CD4-positive, alpha-beta T cell (primary cell): ENCODE measurements at regions of chr1 and their contacts with region 1.

Region 1: GRCh38 chr1:203861379-203862184 is at the start of gene SNRPE:
- DNase-seq: peak; percentile 90 to 99 (median 95)
- ATAC-seq: peak; percentile 98
- H3K4me3 ChIP-seq: peak within 1 kb of the TSS; percentile 95
- H3K4me3 Mint-ChIP-seq: peak within 1 kb of the TSS; percentile 98
- H3K27ac ChIP-seq: peak within 1 kb of the TSS; percentile 64 to 69
- H3K27ac Mint-ChIP-seq: peak within 1 kb of the TSS; percentile 95
- H3K4me1 ChIP-seq: peaks cover 15% of the 10 kb centered on the region
- H3K4me1 Mint-ChIP-seq: peaks cover 30% of the 10 kb centered on the region
- H3K27me3 ChIP-seq: no peaks in the 10 kb centered on the region
- H3K27me3 Mint-ChIP-seq: no peaks in the 10 kb centered on the region
- CTCF ChIP-seq: peak; percentile 87
- total RNA-seq, gene SNRPE: 63.0 to 65.9 TPM

Region 2: GRCh38 chr1:202888531-202889360 is 972.8 kb before region 1 on chr1 and contains the start of gene RABIF:
- CTCF ChIA-PET with region 1: no interaction called
- POLR2A ChIA-PET with region 1: no interaction called
- intact Hi-C with region 1: loop called in 1 of 2 experiments (anchors 10 kb)
- DNase-seq: peak; percentile 94 to 99 (median 96)
- ATAC-seq: peak; percentile 90
- H3K4me3 ChIP-seq: peak within 1 kb of the TSS; percentile 77
- H3K4me3 Mint-ChIP-seq: peak within 1 kb of the TSS; percentile 99
- H3K27ac ChIP-seq: peak within 1 kb of the TSS; percentile 87 to 95
- H3K27ac Mint-ChIP-seq: peak within 1 kb of the TSS; percentile 94
- H3K4me1 ChIP-seq: peaks cover 20% of the 10 kb centered on the region
- H3K4me1 Mint-ChIP-seq: peaks cover 24% of the 10 kb centered on the region
- H3K27me3 ChIP-seq: no peaks in the 10 kb centered on the region
- H3K27me3 Mint-ChIP-seq: no peaks in the 10 kb centered on the region
- CTCF ChIP-seq: peak; percentile 16
- total RNA-seq, gene RABIF: 9.1 to 9.2 TPM

Region 3: GRCh38 chr1:203026031-203026989 is 835.3 kb before region 1 on chr1 and contains the start of gene PPFIA4:
- CTCF ChIA-PET with region 1: no interaction called
- POLR2A ChIA-PET with region 1: no interaction called
- intact Hi-C with region 1: loop called in 1 of 2 experiments (anchors 10 kb)
- DNase-seq: peak; percentile 74 to 95 (median 86)
- ATAC-seq: peak; percentile 93
- H3K4me3 ChIP-seq: peak within 1 kb of the TSS; percentile 89
- H3K4me3 Mint-ChIP-seq: peak within 1 kb of the TSS; percentile 85
- H3K27ac ChIP-seq: peak within 1 kb of the TSS; percentile 26 to 63
- H3K27ac Mint-ChIP-seq: peak within 1 kb of the TSS; percentile 79
- H3K4me1 ChIP-seq: peaks cover 17% of the 10 kb centered on the region
- H3K4me1 Mint-ChIP-seq: peaks cover 14% of the 10 kb centered on the region
- H3K27me3 ChIP-seq: no peaks in the 10 kb centered on the region
- H3K27me3 Mint-ChIP-seq: no peaks in the 10 kb centered on the region
- CTCF ChIP-seq: no peak
- total RNA-seq, gene PPFIA4: 0.93 to 0.98 TPM

Region 4: DNA sequence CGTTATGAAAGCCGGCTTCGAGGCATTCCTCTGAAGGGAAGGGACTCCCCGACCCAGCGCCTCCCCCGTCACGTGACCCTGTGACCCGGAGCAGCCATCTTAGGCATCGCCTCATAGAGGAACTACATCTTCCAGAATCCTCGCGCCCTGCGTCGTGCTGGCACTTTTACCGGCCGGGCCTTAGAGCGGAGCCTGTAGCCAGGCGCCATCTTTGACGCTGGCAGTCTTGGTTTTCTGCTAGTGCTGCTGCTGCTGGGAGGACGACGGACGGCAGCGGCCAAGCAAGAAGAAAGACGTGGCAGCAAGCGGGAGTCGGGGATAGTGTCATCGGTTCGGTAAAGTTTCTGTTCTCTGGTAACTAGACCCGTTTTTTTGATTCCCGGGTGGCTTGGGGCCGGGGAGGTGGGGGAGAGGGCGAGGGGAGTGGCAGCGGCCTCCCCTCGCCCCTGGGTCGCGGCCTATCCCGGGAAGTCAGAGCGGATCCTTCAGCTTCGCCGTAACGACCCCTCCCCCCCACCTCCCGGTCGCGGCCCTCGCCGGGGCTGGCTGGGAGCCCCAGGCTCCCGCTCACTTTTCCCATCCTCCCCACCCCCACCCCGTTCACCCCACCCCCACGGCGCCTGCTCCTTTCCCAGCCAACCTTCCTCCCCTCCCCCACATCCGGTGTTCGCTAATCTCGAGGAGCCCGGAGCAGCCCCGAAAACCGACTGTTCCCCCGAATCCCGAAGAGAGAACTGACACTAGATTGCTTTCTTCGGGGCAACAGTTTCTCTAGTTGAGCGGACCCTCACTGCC is 65.9 kb before region 1 on chr1 and contains the starts of genes ZBED6 and ZC3H11A:
- CTCF ChIA-PET with region 1: interaction called, 3 read pairs
- POLR2A ChIA-PET with region 1: no interaction called
- intact Hi-C with region 1: loop called in 1 of 2 experiments (anchors 1 kb)
- DNase-seq: peak; percentile 96 to 100 (median 98)
- ATAC-seq: peak; percentile 98
- H3K4me3 ChIP-seq: peak within 1 kb of the TSS; percentile 83
- H3K4me3 Mint-ChIP-seq: peak within 1 kb of the TSS; percentile 98
- H3K27ac ChIP-seq: peak within 1 kb of the TSS; percentile 83 to 87
- H3K27ac Mint-ChIP-seq: peak within 1 kb of the TSS; percentile 86
- H3K4me1 ChIP-seq: peaks cover 32% of the 10 kb centered on the region
- H3K4me1 Mint-ChIP-seq: peaks cover 56% of the 10 kb centered on the region
- H3K27me3 ChIP-seq: no peaks in the 10 kb centered on the region
- H3K27me3 Mint-ChIP-seq: no peaks in the 10 kb centered on the region
- CTCF ChIP-seq: no peak
- total RNA-seq, gene ZBED6: 25.0 to 25.2 TPM
- total RNA-seq, gene ZC3H11A: 67.6 to 73.3 TPM

Region 5: GRCh38 chr1:204104133-204104871 is 242.7 kb after region 1 on chr1:
- CTCF ChIA-PET with region 1: no interaction called
- POLR2A ChIA-PET with region 1: no interaction called
- intact Hi-C with region 1: no loop called
- DNase-seq: peak in 3 of 14 experiments; percentile 30 to 67 (median 34)
- ATAC-seq: peak; percentile 52
- H3K4me3 ChIP-seq: no peak overlapping the region
- H3K4me3 Mint-ChIP-seq: no peak overlapping the region
- H3K27ac ChIP-seq: peak overlapping the region in 1 of 2 donors; percentile 83
- H3K27ac Mint-ChIP-seq: peak overlapping the region; percentile 69
- H3K4me1 ChIP-seq: peaks cover 43% of the 10 kb centered on the region
- H3K4me1 Mint-ChIP-seq: peaks cover 25% of the 10 kb centered on the region
- H3K27me3 ChIP-seq: no peaks in the 10 kb centered on the region
- H3K27me3 Mint-ChIP-seq: peaks cover 6% of the 10 kb centered on the region
- CTCF ChIP-seq: no peak

Region 6: GRCh38 chr1:204363335-204364124 is 501.9 kb after region 1 on chr1:
- CTCF ChIA-PET with region 1: interaction called, 4 read pairs
- POLR2A ChIA-PET with region 1: no interaction called
- intact Hi-C with region 1: loop called (anchors 10 kb)
- DNase-seq: peak; percentile 56 to 90 (median 64)
- ATAC-seq: peak; percentile 97
- H3K4me3 ChIP-seq: peak overlapping the region; percentile 61
- H3K4me3 Mint-ChIP-seq: peak overlapping the region; percentile 26
- H3K27ac ChIP-seq: no peak overlapping the region
- H3K27ac Mint-ChIP-seq: no peak overlapping the region
- H3K4me1 ChIP-seq: peaks cover 20% of the 10 kb centered on the region
- H3K4me1 Mint-ChIP-seq: peaks cover 5% of the 10 kb centered on the region
- H3K27me3 ChIP-seq: peaks cover 0 to 5% of the 10 kb centered on the region in 2 experiments
- H3K27me3 Mint-ChIP-seq: peaks cover 9% of the 10 kb centered on the region
- CTCF ChIP-seq: peak; percentile 96

Region 7: GRCh38 chr1:205211169-205211838 is 1349.7 kb after region 1 on chr1 and contains the start of gene DSTYK:
- CTCF ChIA-PET with region 1: no interaction called
- POLR2A ChIA-PET with region 1: no interaction called
- intact Hi-C with region 1: loop called in 1 of 2 experiments (anchors 5 kb)
- DNase-seq: peak; percentile 84 to 95 (median 88)
- ATAC-seq: peak; percentile 92
- H3K4me3 ChIP-seq: peak within 1 kb of the TSS; percentile 99
- H3K4me3 Mint-ChIP-seq: peak within 1 kb of the TSS; percentile 98
- H3K27ac ChIP-seq: peak within 1 kb of the TSS; percentile 67 to 80
- H3K27ac Mint-ChIP-seq: peak within 1 kb of the TSS; percentile 98
- H3K4me1 ChIP-seq: peaks cover 19% of the 10 kb centered on the region
- H3K4me1 Mint-ChIP-seq: peaks cover 57% of the 10 kb centered on the region
- H3K27me3 ChIP-seq: no peaks in the 10 kb centered on the region
- H3K27me3 Mint-ChIP-seq: peaks cover 5% of the 10 kb centered on the region
- CTCF ChIP-seq: no peak
- total RNA-seq, gene DSTYK: 13.9 to 15.3 TPM